Aorta (tissue), 5 donors: ENCODE measurements at regions of chr6 and their contacts with region 1.

Region 1: GRCh38 chr6:33454009-33454946 is at the start of gene ZBTB9:
- DNase-seq: peak; percentile 97 to 98
- ATAC-seq: peak; percentile 98
- H3K4me3 ChIP-seq: peak within 1 kb of the TSS; percentile 36 to 48
- H3K27ac ChIP-seq: no peak within 1 kb of the TSS
- H3K4me1 ChIP-seq: no peaks in the 10 kb centered on the region
- H3K27me3 ChIP-seq: no peaks in the 10 kb centered on the region
- total RNA-seq, gene ZBTB9: 3.0 to 4.2 TPM

Region 2: GRCh38 chr6:33410050-33410710 is 44.1 kb before region 1 on chr6:
- intact Hi-C with region 1: loop called in 1 of 2 experiments (anchors 5 kb)
- DNase-seq: peak; percentile 99
- ATAC-seq: peak; percentile 97
- H3K4me3 ChIP-seq: peak overlapping the region; percentile 79 to 99
- H3K27ac ChIP-seq: peak overlapping the region in 1 of 2 donors; percentile 54
- H3K4me1 ChIP-seq: no peaks in the 10 kb centered on the region
- H3K27me3 ChIP-seq: no peaks in the 10 kb centered on the region

Region 3: GRCh38 chr6:33477864-33478263 is 23.6 kb after region 1 on chr6:
- intact Hi-C with region 1: no loop called
- DNase-seq: no peak
- ATAC-seq: no peak
- H3K4me3 ChIP-seq: no peak overlapping the region
- H3K27ac ChIP-seq: no peak overlapping the region
- H3K4me1 ChIP-seq: no peaks in the 10 kb centered on the region
- H3K27me3 ChIP-seq: no peaks in the 10 kb centered on the region

Region 4: DNA sequence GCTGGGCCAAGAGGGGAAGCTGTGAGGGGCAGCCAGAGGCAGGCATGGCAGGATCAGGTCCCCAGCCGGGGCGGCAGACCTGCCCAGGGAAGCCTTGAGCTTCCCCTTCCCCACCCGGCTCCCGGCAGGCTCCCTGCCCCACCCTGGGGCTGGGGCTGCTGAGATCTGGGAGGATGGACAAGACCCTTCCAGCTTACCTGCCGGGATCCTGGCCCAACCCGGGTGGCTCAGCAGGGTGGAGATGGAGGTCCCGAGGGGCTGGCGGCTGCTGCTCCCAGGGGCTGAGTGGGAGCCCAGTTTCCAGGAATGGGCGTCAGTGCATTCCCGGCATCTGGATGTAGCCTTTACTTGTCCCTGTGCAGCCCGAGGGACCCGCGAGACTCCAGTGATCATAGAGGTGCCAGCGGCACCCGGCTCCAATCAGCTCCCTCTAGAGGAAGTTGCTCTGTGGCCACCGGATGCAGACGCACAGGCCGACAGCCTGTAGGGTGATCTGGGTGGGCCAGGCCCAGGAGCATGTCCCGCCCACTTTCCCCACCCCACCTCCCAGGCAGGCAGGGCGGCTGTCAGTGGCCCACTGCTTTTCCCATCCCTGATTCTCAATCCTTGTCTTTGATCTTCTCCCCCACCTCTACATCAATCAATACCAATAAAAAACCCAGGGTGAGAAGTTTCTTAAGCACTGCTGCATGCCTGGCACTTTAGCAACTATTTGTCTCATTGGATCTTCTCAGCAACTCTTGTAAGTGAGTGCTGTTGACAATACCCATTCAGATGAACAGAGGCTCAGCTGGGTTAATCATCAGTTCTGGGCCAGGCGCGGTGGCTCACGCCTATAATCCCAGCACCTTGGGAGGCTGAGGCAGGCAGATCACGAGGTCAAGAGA is 125.8 kb after region 1 on chr6 and contains the start of gene BAK1:
- intact Hi-C with region 1: loop called in 1 of 2 experiments (anchors 10 kb)
- DNase-seq: peak; percentile 95 to 96
- ATAC-seq: peak; percentile 93
- H3K4me3 ChIP-seq: peak within 1 kb of the TSS; percentile 32 to 68
- H3K27ac ChIP-seq: peak within 1 kb of the TSS; percentile 43 to 47
- H3K4me1 ChIP-seq: no peaks in the 10 kb centered on the region
- H3K27me3 ChIP-seq: no peaks in the 10 kb centered on the region
- total RNA-seq, gene BAK1: 12.4 to 15.0 TPM

Region 5: GRCh38 chr6:33592411-33593054 is 138.3 kb after region 1 on chr6:
- intact Hi-C with region 1: no loop called
- DNase-seq: no peak
- ATAC-seq: no peak
- H3K4me3 ChIP-seq: no peak overlapping the region
- H3K27ac ChIP-seq: no peak overlapping the region
- H3K4me1 ChIP-seq: no peaks in the 10 kb centered on the region
- H3K27me3 ChIP-seq: no peaks in the 10 kb centered on the region